CD8-positive, alpha-beta memory T cell (primary cell): ENCODE measurements at regions of chr17 and their contacts with region 1.

Region 1: GRCh38 chr17:67441052-67441927 is 64.2 kb downstream of the PITPNC1 start:
- DNase-seq: peak; percentile 64 to 92 (median 85)
- H3K4me3 ChIP-seq: peak overlapping the region; percentile 67
- H3K4me3 Mint-ChIP-seq: peak overlapping the region; percentile 73 to 87 (median 80)
- H3K27ac ChIP-seq: peak overlapping the region; percentile 86
- H3K27ac Mint-ChIP-seq: peak overlapping the region; percentile 91 to 100 (median 96)
- H3K4me1 ChIP-seq: peaks cover 92% of the 10 kb centered on the region
- H3K4me1 Mint-ChIP-seq: peaks cover 73 to 94% (median 86%) of the 10 kb centered on the region in 3 donors
- H3K27me3 ChIP-seq: no peaks in the 10 kb centered on the region
- H3K27me3 Mint-ChIP-seq: no peaks in the 10 kb centered on the region

Region 2: GRCh38 chr17:67390646-67391384 is 50.5 kb before region 1 on chr17:
- CTCF ChIA-PET with region 1: interaction called, 8 read pairs
- POLR2A ChIA-PET with region 1: interaction called, 15 read pairs
- DNase-seq: peak; percentile 42 to 82 (median 55)
- H3K4me3 ChIP-seq: peak overlapping the region; percentile 3
- H3K4me3 Mint-ChIP-seq: peak overlapping the region; percentile 75 to 96 (median 84)
- H3K27ac ChIP-seq: peak overlapping the region; percentile 1
- H3K27ac Mint-ChIP-seq: peak overlapping the region; percentile 89 to 99 (median 94)
- H3K4me1 ChIP-seq: peaks cover 69% of the 10 kb centered on the region
- H3K4me1 Mint-ChIP-seq: peaks cover 69 to 94% (median 88%) of the 10 kb centered on the region in 3 donors
- H3K27me3 ChIP-seq: no peaks in the 10 kb centered on the region
- H3K27me3 Mint-ChIP-seq: no peaks in the 10 kb centered on the region

Region 3: DNA sequence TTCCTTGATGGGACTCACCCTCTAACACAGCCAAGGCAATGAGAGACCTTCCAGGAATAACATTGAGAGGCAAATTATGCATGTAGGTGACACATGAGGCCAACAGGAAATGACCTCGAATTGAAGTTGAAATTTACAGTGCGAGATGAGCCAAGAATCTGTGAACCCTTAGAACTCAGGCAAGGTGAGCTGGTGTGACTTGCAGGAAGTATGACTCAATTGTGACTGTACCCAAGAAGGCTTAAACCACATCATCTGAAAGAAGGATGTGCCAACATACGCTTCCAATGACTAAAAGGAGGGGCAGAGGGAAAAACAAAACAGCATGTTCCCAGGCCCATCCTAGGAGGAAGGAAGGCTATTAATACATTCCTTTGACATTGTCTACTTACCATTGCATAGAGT is 19.4 kb before region 1 on chr17:
- CTCF ChIA-PET with region 1: interaction called, 13 read pairs
- POLR2A ChIA-PET with region 1: interaction called, 18 read pairs
- DNase-seq: peak; percentile 16 to 82 (median 79)
- H3K4me3 ChIP-seq: no peak overlapping the region
- H3K4me3 Mint-ChIP-seq: peak overlapping the region; percentile 1 to 82 (median 67)
- H3K27ac ChIP-seq: peak overlapping the region; percentile 49
- H3K27ac Mint-ChIP-seq: peak overlapping the region; percentile 89 to 99 (median 96)
- H3K4me1 ChIP-seq: peaks cover 73% of the 10 kb centered on the region
- H3K4me1 Mint-ChIP-seq: peaks cover 72 to 97% (median 83%) of the 10 kb centered on the region in 3 donors
- H3K27me3 ChIP-seq: no peaks in the 10 kb centered on the region
- H3K27me3 Mint-ChIP-seq: no peaks in the 10 kb centered on the region

Region 4: DNA sequence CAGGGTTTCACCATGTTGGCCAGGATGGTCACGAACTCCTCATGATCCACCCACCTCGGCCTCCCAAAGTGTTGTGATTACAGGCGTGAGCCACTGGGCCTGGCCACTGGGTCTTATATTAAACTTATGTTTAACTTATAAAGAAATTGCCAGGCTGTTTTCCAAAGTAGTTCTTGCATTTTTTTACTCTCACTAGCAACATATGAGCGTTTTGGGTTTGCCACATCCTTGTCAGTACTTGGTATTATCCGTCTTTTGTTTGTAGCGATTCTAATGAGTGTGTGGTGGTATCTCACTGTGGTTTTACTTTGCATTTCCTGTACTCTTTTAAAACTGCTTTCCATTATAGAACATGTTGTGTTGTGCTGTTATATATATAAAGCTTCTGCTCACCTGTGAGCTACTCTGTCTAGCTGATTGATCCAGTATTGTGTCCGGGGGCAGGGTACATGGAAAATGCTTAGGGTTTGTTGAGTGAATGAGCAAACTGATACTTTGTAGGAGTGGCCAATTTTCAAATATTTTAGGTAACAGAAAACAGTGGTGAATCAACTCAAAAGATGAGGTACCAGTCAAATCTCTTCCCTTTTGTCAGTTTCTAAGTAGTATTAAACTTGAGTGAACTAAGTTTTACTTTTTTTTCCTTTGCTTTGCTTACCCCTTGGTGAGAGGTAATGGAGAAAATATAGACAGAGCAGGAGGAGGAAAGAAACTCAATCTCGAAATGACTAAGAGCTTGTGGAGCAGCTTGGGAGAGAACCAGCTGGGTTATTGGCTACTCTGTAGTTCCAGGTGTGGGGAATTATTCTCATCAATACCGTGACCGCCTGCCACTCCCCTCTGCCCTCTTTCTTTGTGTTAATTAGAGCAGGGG is 11.6 kb after region 1 on chr17:
- CTCF ChIA-PET with region 1: interaction called, 32 read pairs
- POLR2A ChIA-PET with region 1: interaction called, 38 read pairs
- DNase-seq: peak in 3 of 5 donors; percentile 52 to 78 (median 77)
- H3K4me3 ChIP-seq: peak overlapping the region; percentile 11
- H3K4me3 Mint-ChIP-seq: peak overlapping the region; percentile 61 to 83 (median 77)
- H3K27ac ChIP-seq: peak overlapping the region; percentile 20
- H3K27ac Mint-ChIP-seq: peak overlapping the region; percentile 88 to 99 (median 94)
- H3K4me1 ChIP-seq: peaks cover 90% of the 10 kb centered on the region
- H3K4me1 Mint-ChIP-seq: peaks cover 88 to 100% (median 97%) of the 10 kb centered on the region in 3 donors
- H3K27me3 ChIP-seq: no peaks in the 10 kb centered on the region
- H3K27me3 Mint-ChIP-seq: no peaks in the 10 kb centered on the region

Region 5: GRCh38 chr17:67469208-67469895 is 28.1 kb after region 1 on chr17:
- CTCF ChIA-PET with region 1: interaction called, 49 read pairs
- POLR2A ChIA-PET with region 1: interaction called, 38 read pairs
- DNase-seq: peak in 2 of 5 donors; percentile 34 to 65
- H3K4me3 ChIP-seq: peak overlapping the region; percentile 33
- H3K4me3 Mint-ChIP-seq: peak overlapping the region; percentile 2 to 85 (median 77)
- H3K27ac ChIP-seq: no peak overlapping the region
- H3K27ac Mint-ChIP-seq: peak overlapping the region; percentile 52 to 99 (median 88)
- H3K4me1 ChIP-seq: peaks cover 69% of the 10 kb centered on the region
- H3K4me1 Mint-ChIP-seq: peaks cover 60 to 86% (median 69%) of the 10 kb centered on the region in 3 donors
- H3K27me3 ChIP-seq: no peaks in the 10 kb centered on the region
- H3K27me3 Mint-ChIP-seq: no peaks in the 10 kb centered on the region

Region 6: GRCh38 chr17:67481808-67482207 is 40.5 kb after region 1 on chr17:
- CTCF ChIA-PET with region 1: interaction called, 10 read pairs
- POLR2A ChIA-PET with region 1: interaction called, 38 read pairs
- DNase-seq: no peak
- H3K4me3 ChIP-seq: no peak overlapping the region
- H3K4me3 Mint-ChIP-seq: peak overlapping the region in 3 of 7 donors; percentile 20 to 52 (median 25)
- H3K27ac ChIP-seq: no peak overlapping the region
- H3K27ac Mint-ChIP-seq: peak overlapping the region in 7 of 8 donors; percentile 19 to 80 (median 59)
- H3K4me1 ChIP-seq: peaks cover 53% of the 10 kb centered on the region
- H3K4me1 Mint-ChIP-seq: peaks cover 75 to 90% (median 86%) of the 10 kb centered on the region in 3 donors
- H3K27me3 ChIP-seq: no peaks in the 10 kb centered on the region
- H3K27me3 Mint-ChIP-seq: no peaks in the 10 kb centered on the region

Region 7: GRCh38 chr17:67663460-67663859 is 222.2 kb after region 1 on chr17:
- CTCF ChIA-PET with region 1: no interaction called
- POLR2A ChIA-PET with region 1: no interaction called
- DNase-seq: no peak
- H3K4me3 ChIP-seq: no peak overlapping the region
- H3K4me3 Mint-ChIP-seq: no peak overlapping the region
- H3K27ac ChIP-seq: no peak overlapping the region
- H3K27ac Mint-ChIP-seq: peak overlapping the region in 1 of 8 donors; percentile 68
- H3K4me1 ChIP-seq: no peaks in the 10 kb centered on the region
- H3K4me1 Mint-ChIP-seq: peaks cover 12 to 24% (median 15%) of the 10 kb centered on the region in 3 donors
- H3K27me3 ChIP-seq: no peaks in the 10 kb centered on the region
- H3K27me3 Mint-ChIP-seq: no peaks in the 10 kb centered on the region